K562 (cell line): ENCODE measurements at regions of chr5 and their contacts with region 1.

Region 1: GRCh38 chr5:157253547-157253946 is 12.4 kb upstream of the CYFIP2 start:
- DNase-seq: peak; percentile 41 to 66 (median 59)
- ATAC-seq: peak; percentile 87
- H3K4me3 ChIP-seq: no peak overlapping the region
- H3K27ac ChIP-seq: no peak overlapping the region
- H3K4me1 ChIP-seq: no peaks in the 10 kb centered on the region
- H3K27me3 ChIP-seq: peaks cover 0 to 5% of the 10 kb centered on the region in 2 experiments; a peak in 1 of 5 replicates
- CTCF ChIP-seq: peak; percentile 73 to 91 (median 80)
- EP300 ChIP-seq: no peak
- POLR2A ChIP-seq: no peak
- RAD21 ChIP-seq: peak; percentile 90 to 93

Region 2: DNA sequence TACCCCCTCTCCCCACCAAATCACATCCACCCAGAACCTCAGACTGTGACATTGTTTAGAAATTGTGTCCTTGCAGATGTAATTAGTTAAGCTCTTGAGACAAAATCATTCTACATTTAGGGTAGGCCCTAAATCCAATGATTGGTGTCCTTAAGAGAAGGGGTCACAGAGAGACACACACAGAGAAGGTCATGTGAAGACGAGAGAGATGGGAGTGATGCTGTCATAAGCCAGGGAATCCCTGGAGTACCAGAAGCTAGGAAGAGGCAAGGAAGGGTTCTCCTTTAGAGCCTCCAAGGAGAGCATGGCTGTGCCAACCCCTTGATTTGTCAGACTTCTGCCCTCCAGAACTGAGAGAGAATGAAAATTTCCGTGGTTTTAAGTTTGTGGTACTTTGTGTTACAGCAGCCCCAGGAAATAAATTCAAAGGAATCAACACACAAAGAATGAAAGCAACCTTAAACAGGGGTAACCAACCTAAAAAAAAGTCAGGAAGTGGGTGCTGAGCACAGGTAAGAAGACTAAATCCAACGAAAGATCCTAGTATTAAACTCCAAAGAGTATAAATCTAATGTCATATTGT is 324.1 kb before region 1 on chr5:
- CTCF ChIA-PET with region 1: no interaction called
- POLR2A ChIA-PET with region 1: no interaction called
- in situ Hi-C with region 1: no loop called
- intact Hi-C with region 1: no loop called
- DNase-seq: no peak
- ATAC-seq: no peak
- H3K4me3 ChIP-seq: no peak overlapping the region
- H3K27ac ChIP-seq: no peak overlapping the region
- H3K4me1 ChIP-seq: no peaks in the 10 kb centered on the region
- H3K27me3 ChIP-seq: no peaks in the 10 kb centered on the region
- CTCF ChIP-seq: no peak
- EP300 ChIP-seq: no peak
- POLR2A ChIP-seq: no peak
- RAD21 ChIP-seq: no peak

Region 3: GRCh38 chr5:157148734-157149615 is 104.6 kb before region 1 on chr5:
- CTCF ChIA-PET with region 1: no interaction called
- POLR2A ChIA-PET with region 1: no interaction called
- in situ Hi-C with region 1: no loop called
- intact Hi-C with region 1: loop called (anchors 1 kb)
- DNase-seq: peak; percentile 71 to 79 (median 74)
- ATAC-seq: peak; percentile 95
- H3K4me3 ChIP-seq: no peak overlapping the region
- H3K27ac ChIP-seq: no peak overlapping the region
- H3K4me1 ChIP-seq: peaks cover 0 to 5% of the 10 kb centered on the region in 2 experiments; a peak in 3 of 5 replicates
- H3K27me3 ChIP-seq: no peaks in the 10 kb centered on the region; a peak in 1 of 5 replicates
- CTCF ChIP-seq: peak; percentile 75 to 89 (median 83)
- EP300 ChIP-seq: no peak
- POLR2A ChIP-seq: no peak
- RAD21 ChIP-seq: peak; percentile 76 to 79

Region 4: GRCh38 chr5:158119961-158120723 is 866.6 kb after region 1 on chr5:
- CTCF ChIA-PET with region 1: no interaction called
- POLR2A ChIA-PET with region 1: no interaction called
- in situ Hi-C with region 1: no loop called
- intact Hi-C with region 1: no loop called
- DNase-seq: no peak
- ATAC-seq: no peak
- H3K4me3 ChIP-seq: no peak overlapping the region
- H3K27ac ChIP-seq: no peak overlapping the region
- H3K4me1 ChIP-seq: no peaks in the 10 kb centered on the region
- H3K27me3 ChIP-seq: no peaks in the 10 kb centered on the region
- CTCF ChIP-seq: no peak
- EP300 ChIP-seq: no peak
- POLR2A ChIP-seq: no peak
- RAD21 ChIP-seq: no peak